ENCODE measurements at regions of chr9 and their contacts with region 1.

Region 1: GRCh38 chr9:613771-614347 is 227.6 kb upstream of the DMRT1 start:
- DNase-seq: peak; percentile 77
- ATAC-seq: peak; percentile 98
- H3K4me3 Mint-ChIP-seq: no peak overlapping the region
- H3K27ac Mint-ChIP-seq: no peak overlapping the region
- H3K4me1 Mint-ChIP-seq: peaks cover 4% of the 10 kb centered on the region
- H3K27me3 Mint-ChIP-seq: no peaks in the 10 kb centered on the region

Region 2: GRCh38 chr9:459491-460444 is 154.1 kb before region 1 on chr9:
- CTCF ChIA-PET with region 1: no interaction called
- POLR2A ChIA-PET with region 1: no interaction called
- intact Hi-C with region 1: no loop called
- DNase-seq: no peak
- ATAC-seq: no peak
- H3K4me3 Mint-ChIP-seq: no peak overlapping the region
- H3K27ac Mint-ChIP-seq: peak overlapping the region; percentile 28
- H3K4me1 Mint-ChIP-seq: peaks cover 5% of the 10 kb centered on the region
- H3K27me3 Mint-ChIP-seq: no peaks in the 10 kb centered on the region

Region 3: DNA sequence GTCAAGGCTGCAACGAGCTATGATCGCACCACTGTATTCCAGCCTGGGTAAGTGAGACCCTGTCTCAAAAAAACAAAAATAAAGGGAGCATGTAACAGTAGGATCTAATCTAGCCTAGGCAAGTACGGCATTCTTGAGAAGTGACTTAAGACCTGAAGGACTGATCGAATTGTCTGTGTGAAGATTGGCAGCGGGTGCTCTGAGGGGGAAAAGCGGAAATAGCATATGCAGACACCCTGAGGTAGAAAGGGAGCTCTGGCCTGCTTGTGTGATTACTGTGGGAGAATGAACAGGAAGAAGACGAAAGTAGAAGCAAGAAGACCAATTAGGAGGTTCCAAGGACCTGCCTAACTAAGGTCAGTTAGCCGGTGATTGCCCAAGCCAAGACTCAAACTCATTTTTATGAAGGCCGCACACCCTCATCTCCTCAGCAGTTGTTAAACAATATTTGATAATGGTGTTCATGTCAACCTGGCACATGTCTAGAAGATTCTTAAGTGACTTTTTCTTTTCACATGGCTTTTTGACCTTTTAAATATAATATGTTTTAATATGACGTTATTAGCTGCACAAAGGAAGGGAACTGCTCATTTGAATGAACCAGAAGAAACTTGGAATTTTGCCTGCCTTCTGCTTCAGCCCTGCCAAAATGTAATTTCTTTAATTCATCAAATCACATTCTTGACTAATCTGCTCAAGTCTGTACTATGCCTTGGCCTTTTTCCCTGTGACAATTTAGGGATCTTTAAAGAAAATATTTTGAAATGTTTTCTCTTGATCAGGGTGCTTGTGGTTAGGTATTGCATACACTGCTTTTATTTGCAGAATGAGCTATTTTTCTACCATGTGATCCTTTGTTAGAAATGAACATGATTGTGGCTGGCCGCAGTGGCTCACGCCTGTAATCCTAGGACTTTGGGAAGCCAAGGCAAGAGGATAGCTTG is 61.6 kb before region 1 on chr9:
- CTCF ChIA-PET with region 1: no interaction called
- POLR2A ChIA-PET with region 1: no interaction called
- intact Hi-C with region 1: no loop called
- DNase-seq: no peak
- ATAC-seq: no peak
- H3K4me3 Mint-ChIP-seq: no peak overlapping the region
- H3K27ac Mint-ChIP-seq: no peak overlapping the region
- H3K4me1 Mint-ChIP-seq: no peaks in the 10 kb centered on the region
- H3K27me3 Mint-ChIP-seq: peaks cover 2% of the 10 kb centered on the region

Region 4: DNA sequence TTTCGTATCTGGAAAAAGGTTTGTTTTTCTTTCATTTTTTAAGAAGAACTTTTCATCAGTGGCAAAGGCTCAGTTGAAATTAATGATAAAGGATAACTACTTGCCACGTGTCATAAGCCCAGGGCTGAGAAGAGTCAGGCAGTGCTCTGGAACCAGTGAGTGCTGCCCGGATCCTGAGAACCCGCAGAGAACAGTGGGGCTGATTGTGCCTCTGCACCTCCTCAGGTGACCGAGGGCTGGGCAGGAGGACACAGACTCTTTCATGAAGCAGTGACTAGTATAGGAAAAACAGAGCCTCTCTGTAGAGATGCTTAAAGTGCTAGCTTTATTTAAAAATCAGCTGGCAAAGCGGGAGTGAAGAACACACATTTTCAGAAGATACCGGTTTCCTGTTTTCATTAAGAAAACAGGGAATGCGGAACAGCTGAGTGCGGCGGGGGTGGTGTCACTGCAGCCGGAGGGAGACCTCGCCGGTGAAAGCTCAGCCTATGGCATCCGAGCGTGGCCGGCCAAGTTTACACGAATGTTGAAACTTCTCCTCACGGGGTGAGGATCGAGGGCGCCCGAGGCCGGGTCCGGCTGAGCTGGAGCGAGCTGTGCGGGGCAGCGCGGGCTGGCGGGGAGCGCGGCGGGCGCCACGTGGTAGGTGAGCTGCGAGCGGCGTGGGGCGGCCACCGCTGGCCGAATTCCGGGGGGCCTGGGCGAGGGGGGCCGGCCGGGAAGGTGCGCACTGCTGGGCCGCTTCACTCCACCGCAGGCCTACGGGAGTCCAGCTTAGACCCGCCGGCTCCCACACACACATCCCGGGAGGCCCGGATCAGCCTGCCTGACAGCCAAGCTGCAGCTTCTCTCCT is 93.0 kb after region 1 on chr9:
- CTCF ChIA-PET with region 1: no interaction called
- POLR2A ChIA-PET with region 1: no interaction called
- intact Hi-C with region 1: loop called in 1 of 2 experiments (anchors 10 kb)
- DNase-seq: peak; percentile 43
- ATAC-seq: peak; percentile 81
- H3K4me3 Mint-ChIP-seq: peak overlapping the region; percentile 69
- H3K27ac Mint-ChIP-seq: peak overlapping the region; percentile 27
- H3K4me1 Mint-ChIP-seq: peaks cover 9% of the 10 kb centered on the region
- H3K27me3 Mint-ChIP-seq: peaks cover 25% of the 10 kb centered on the region

Region 5: GRCh38 chr9:763692-764524 is 150.0 kb after region 1 on chr9:
- CTCF ChIA-PET with region 1: interaction called, 4 read pairs
- POLR2A ChIA-PET with region 1: no interaction called
- intact Hi-C with region 1: loop called (anchors 1 kb)
- DNase-seq: peak; percentile 61
- ATAC-seq: peak; percentile 96
- H3K4me3 Mint-ChIP-seq: no peak overlapping the region
- H3K27ac Mint-ChIP-seq: no peak overlapping the region
- H3K4me1 Mint-ChIP-seq: peaks cover 2% of the 10 kb centered on the region
- H3K27me3 Mint-ChIP-seq: peaks cover 16% of the 10 kb centered on the region

Region 6: GRCh38 chr9:893843-894420 is 280.1 kb after region 1 on chr9:
- CTCF ChIA-PET with region 1: interaction called, 5 read pairs
- POLR2A ChIA-PET with region 1: no interaction called
- intact Hi-C with region 1: loop called in 1 of 2 experiments (anchors 2 kb)
- DNase-seq: peak; percentile 79
- ATAC-seq: peak; percentile 99
- H3K4me3 Mint-ChIP-seq: no peak overlapping the region
- H3K27ac Mint-ChIP-seq: no peak overlapping the region
- H3K4me1 Mint-ChIP-seq: peaks cover 12% of the 10 kb centered on the region
- H3K27me3 Mint-ChIP-seq: peaks cover 13% of the 10 kb centered on the region

Region 7: GRCh38 chr9:1001838-1002237 is 388.0 kb after region 1 on chr9:
- CTCF ChIA-PET with region 1: interaction called, 3 read pairs
- POLR2A ChIA-PET with region 1: no interaction called
- intact Hi-C with region 1: loop called (anchors 2 to 5 kb)
- DNase-seq: no peak
- ATAC-seq: no peak
- H3K4me3 Mint-ChIP-seq: no peak overlapping the region
- H3K27ac Mint-ChIP-seq: no peak overlapping the region
- H3K4me1 Mint-ChIP-seq: peaks cover 5% of the 10 kb centered on the region
- H3K27me3 Mint-ChIP-seq: peaks cover 12% of the 10 kb centered on the region